AG04449 (cell line): ENCODE measurements at regions of chr19 and their contacts with region 1.

Region 1: GRCh38 chr19:33143897-33144405 is 12.0 kb downstream of the WDR88 start:
- DNase-seq: no peak
- H3K4me3 ChIP-seq: no peak overlapping the region
- CTCF ChIP-seq: peak; percentile 97

Region 2: DNA sequence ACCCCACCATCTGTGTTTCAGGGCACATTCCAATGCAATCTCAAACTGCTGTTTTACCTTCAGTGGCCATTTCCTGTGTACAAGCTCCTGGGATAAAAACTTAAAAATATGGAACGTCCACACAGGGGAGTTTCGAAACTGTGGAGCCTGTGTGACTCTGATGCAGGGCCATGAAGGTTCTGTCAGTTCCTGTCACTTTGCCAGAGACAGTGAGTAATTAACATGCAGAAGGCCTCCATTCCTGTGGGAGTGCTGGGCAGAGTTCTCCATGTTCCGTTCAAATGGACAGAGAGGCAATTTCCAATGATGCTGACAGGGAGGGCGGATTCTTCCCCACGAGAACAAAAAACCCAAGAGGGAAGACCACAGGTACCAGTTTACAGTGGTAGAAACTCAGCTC is 12.4 kb after region 1 on chr19:
- CTCF ChIA-PET with region 1: interaction called, 14 read pairs
- POLR2A ChIA-PET with region 1: no interaction called
- DNase-seq: no peak
- H3K4me3 ChIP-seq: no peak overlapping the region
- CTCF ChIP-seq: no peak

Region 3: DNA sequence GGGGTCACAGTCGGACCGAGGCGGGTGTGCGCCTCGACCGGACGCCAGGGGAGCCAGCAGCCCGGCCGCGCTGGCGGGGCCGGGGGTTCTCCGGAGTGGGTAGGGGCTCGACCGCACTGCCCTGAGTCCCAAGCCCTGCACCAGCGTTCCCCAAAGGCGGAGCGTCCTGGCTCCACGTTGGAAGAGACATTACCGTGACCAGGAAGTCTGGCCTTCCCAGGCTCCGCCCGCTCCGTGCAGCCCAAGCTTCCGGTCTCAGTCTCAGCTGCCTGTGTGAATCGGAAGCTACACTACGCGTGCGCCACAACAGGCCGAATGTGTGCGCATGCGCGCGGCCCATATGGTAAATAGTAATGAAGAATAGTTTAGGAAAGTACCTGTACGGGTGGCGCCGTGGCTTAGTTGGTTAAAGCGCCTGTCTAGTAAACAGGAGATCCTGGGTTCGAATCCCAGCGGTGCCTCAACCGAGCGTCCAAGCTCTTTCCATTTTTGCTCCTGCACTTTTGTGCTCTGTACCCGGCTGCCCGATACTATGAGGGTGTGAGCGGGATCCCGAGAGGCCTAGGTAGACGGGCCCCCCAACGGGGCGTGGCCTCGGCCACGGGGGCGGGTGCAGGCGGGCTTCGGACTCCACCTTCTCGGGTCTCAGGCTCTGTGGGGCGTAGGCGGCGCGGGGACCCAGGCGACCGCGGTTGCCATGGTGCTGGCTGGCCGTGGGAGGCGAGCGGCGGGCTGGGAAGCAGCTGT is 32.9 kb after region 1 on chr19:
- CTCF ChIA-PET with region 1: interaction called, 54 read pairs
- POLR2A ChIA-PET with region 1: interaction called, 3 read pairs
- DNase-seq: peak; percentile 91
- H3K4me3 ChIP-seq: peak overlapping the region; percentile 72
- CTCF ChIP-seq: peak; percentile 10